Heart left ventricle (tissue), 16 donors: ENCODE measurements at regions of chr7 and their contacts with region 1.

Region 1: DNA sequence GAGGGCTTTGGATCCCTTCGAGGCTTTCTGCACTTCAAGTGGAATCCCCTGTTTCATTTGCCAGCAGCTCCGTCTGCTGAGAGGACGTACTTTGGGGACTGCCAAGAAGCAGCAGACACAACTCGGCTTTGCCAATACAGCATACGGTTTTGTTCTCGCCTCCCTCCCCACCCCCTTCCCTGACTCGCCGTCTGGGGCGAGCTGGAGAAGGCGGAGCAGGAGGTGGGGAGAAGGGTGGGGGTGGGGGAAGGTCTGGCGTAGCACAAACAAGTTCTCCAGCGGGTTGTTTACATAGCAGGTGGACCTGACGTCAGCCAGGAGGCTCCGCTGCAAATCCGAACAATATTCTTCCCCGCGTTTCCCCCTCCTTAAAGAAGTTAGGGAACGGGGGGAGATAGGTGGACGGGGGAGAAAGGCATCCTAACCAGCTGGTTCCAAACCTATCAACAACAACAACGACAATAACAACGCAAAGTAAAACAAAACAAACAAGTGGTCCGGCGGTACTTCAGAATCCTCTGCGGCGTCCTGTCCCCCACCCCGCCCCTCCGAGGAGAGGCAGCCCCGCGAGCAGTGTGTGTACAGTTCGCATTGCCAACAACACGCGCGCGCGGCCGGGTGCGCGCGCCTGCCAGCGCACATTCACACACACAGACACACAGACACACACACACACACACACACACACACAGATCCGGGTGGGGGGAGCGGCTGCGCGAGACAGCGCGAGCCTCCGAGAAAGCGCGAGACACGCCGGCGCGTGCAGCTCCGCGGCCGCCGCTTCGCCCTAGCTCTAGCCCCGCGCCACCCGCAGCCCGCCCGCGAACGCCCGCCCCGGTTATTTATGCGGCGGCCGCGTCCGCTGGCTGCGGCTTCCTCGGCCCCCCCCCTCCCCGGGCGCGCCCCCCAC is 167.0 kb upstream of the PPP1R3A start:
- DNase-seq: peak; percentile 70 to 89 (median 79)
- ATAC-seq: peak; percentile 77 to 90 (median 88)
- H3K4me3 ChIP-seq: peak overlapping the region; percentile 22 to 73 (median 61)
- H3K27ac ChIP-seq: peak overlapping the region; percentile 56 to 92 (median 79)
- H3K4me1 ChIP-seq: peaks cover 0 to 53% (median 11%) of the 10 kb centered on the region in 12 donors
- H3K27me3 ChIP-seq: peaks cover 5 to 97% (median 65%) of the 10 kb centered on the region in 9 donors
- CTCF ChIP-seq: no peak
- POLR2A ChIP-seq: no peak

Region 2: GRCh38 chr7:113710310-113711106 is 375.3 kb before region 1 on chr7:
- intact Hi-C with region 1: no loop called
- DNase-seq: peak in 1 of 5 donors; percentile 31
- ATAC-seq: peak in 3 of 4 donors; percentile 58 to 75 (median 61)
- H3K4me3 ChIP-seq: no peak overlapping the region
- H3K27ac ChIP-seq: no peak overlapping the region
- H3K4me1 ChIP-seq: peaks cover 0 to 5% (median 0%) of the 10 kb centered on the region in 12 donors
- H3K27me3 ChIP-seq: no peaks in the 10 kb centered on the region
- CTCF ChIP-seq: peak; percentile 88 to 98 (median 92)
- POLR2A ChIP-seq: no peak

Region 3: GRCh38 chr7:113824117-113824823 is 261.6 kb before region 1 on chr7:
- intact Hi-C with region 1: no loop called
- DNase-seq: peak in 1 of 5 donors; percentile 28
- ATAC-seq: peak; percentile 66 to 92 (median 77)
- H3K4me3 ChIP-seq: no peak overlapping the region
- H3K27ac ChIP-seq: peak overlapping the region in 5 of 12 donors; percentile 19 to 36 (median 34)
- H3K4me1 ChIP-seq: peaks cover 0 to 6% (median 0%) of the 10 kb centered on the region in 12 donors
- H3K27me3 ChIP-seq: no peaks in the 10 kb centered on the region
- CTCF ChIP-seq: no peak
- POLR2A ChIP-seq: no peak

Region 4: DNA sequence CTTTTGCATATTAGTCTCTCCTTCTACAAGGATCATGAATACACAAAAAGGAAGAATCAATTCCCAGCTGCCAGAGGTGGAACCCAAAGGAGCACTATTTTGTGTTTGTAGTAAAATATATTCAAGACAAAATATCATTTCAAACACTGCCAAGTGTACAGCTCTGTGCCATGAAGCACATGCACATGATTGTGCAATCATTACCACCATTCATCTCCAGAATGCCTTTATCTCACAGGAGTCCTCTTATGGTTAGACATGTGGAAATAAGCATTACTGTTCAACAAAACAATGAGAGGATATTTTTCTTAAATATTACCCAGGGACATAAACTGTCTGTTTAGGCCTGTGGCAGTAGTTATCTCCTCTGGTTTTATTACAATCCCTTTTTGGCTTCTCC is 15.6 kb before region 1 on chr7:
- intact Hi-C with region 1: no loop called
- DNase-seq: no peak
- ATAC-seq: no peak
- H3K4me3 ChIP-seq: no peak overlapping the region
- H3K27ac ChIP-seq: no peak overlapping the region
- H3K4me1 ChIP-seq: no peaks in the 10 kb centered on the region
- H3K27me3 ChIP-seq: no peaks in the 10 kb centered on the region
- CTCF ChIP-seq: no peak
- POLR2A ChIP-seq: no peak

Region 5: DNA sequence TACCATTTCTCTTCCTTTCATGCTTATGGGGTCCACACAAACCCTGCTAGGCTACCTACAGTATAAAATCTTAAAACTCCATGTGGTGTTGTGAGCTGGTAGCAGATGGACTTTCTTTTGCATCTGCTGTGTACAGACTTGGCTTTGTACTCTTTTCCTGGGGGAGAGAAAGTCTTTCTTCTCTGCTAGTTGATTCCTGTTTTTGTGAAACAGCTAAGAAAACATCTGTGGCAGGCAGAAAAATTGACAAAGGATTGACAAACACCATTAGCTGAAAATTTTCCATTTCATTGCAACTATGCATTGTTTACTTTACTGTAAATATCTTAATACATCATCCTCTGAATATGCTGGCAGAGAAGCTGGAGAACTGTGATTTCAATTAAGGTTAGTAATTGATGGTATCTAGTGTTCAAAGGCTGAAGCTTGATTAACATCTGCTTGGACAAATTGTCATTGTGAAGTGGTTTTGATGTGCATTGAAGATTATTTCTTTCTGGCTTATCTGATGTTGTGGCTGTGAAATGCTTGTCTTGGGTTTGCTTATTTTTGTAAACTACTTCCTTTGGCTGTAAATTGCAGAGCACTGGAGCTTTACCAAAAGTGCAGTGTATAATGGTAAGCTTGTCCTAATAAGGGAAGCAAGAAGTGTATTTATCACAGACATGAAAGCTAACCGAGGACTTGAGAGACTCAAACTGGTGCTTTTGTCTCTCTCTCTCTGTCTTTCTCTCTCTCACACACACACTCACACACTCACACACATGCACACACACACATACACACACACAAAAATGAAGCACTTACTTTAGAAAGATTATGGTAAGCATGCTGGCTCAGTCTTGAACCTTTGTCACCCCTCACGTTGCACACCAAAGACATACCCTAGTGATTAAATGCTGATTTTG is 328.6 kb after region 1 on chr7 and contains the start of gene FOXP2:
- intact Hi-C with region 1: loop called in 5 of 10 experiments (anchors 10 kb)
- DNase-seq: no peak
- ATAC-seq: peak in 3 of 4 donors; percentile 13 to 55 (median 24)
- H3K4me3 ChIP-seq: peak within 1 kb of the TSS in 9 of 12 donors; percentile 23 to 56 (median 39)
- H3K27ac ChIP-seq: peak within 1 kb of the TSS in 8 of 12 donors; percentile 8 to 69 (median 40)
- H3K4me1 ChIP-seq: peaks cover 0 to 10% (median 0%) of the 10 kb centered on the region in 12 donors
- H3K27me3 ChIP-seq: peaks cover 0 to 8% (median 0%) of the 10 kb centered on the region in 9 donors
- CTCF ChIP-seq: no peak
- POLR2A ChIP-seq: no peak
- total RNA-seq, gene FOXP2: 0.84 to 3.7 (median 2.1) TPM

Region 6: GRCh38 chr7:114539575-114539974 is 453.7 kb after region 1 on chr7:
- intact Hi-C with region 1: loop called in 3 of 10 experiments (anchors 5 to 10 kb)
- DNase-seq: peak in 1 of 5 donors; percentile 23
- ATAC-seq: no peak
- H3K4me3 ChIP-seq: no peak overlapping the region
- H3K27ac ChIP-seq: no peak overlapping the region
- H3K4me1 ChIP-seq: no peaks in the 10 kb centered on the region
- H3K27me3 ChIP-seq: no peaks in the 10 kb centered on the region
- CTCF ChIP-seq: peak in 9 of 12 donors; percentile 12 to 51 (median 25)
- POLR2A ChIP-seq: no peak

Region 7: GRCh38 chr7:114653364-114654088 is 567.7 kb after region 1 on chr7:
- intact Hi-C with region 1: loop called in 1 of 10 experiments (anchors 10 kb)
- DNase-seq: no peak
- ATAC-seq: no peak
- H3K4me3 ChIP-seq: peak overlapping the region in 1 of 12 donors; percentile 8
- H3K27ac ChIP-seq: no peak overlapping the region
- H3K4me1 ChIP-seq: peaks cover 0 to 7% (median 0%) of the 10 kb centered on the region in 12 donors
- H3K27me3 ChIP-seq: no peaks in the 10 kb centered on the region
- CTCF ChIP-seq: no peak
- POLR2A ChIP-seq: no peak

Region 8: GRCh38 chr7:115217373-115217772 is 1131.5 kb after region 1 on chr7:
- intact Hi-C with region 1: loop called in 1 of 10 experiments (anchors 10 kb)
- DNase-seq: no peak
- ATAC-seq: no peak
- H3K4me3 ChIP-seq: no peak overlapping the region
- H3K27ac ChIP-seq: no peak overlapping the region
- H3K4me1 ChIP-seq: peaks cover 0 to 6% (median 0%) of the 10 kb centered on the region in 12 donors
- H3K27me3 ChIP-seq: no peaks in the 10 kb centered on the region
- CTCF ChIP-seq: peak in 11 of 12 donors; percentile 18 to 59 (median 34)
- POLR2A ChIP-seq: no peak